Endothelial cell of umbilical vein (primary cell): ENCODE measurements at regions of chr21 and their contacts with region 1.

Region 1: GRCh38 chr21:27700974-27701614 is 734.2 kb upstream of the ADAMTS5 start:
- DNase-seq: peak; percentile 81
- H3K4me3 ChIP-seq: no peak overlapping the region
- H3K27ac ChIP-seq: no peak overlapping the region
- H3K4me1 ChIP-seq: no peaks in the 10 kb centered on the region
- H3K27me3 ChIP-seq: no peaks in the 10 kb centered on the region
- CTCF ChIP-seq: peak; percentile 78 to 82
- POLR2A ChIP-seq: no peak

Region 2: GRCh38 chr21:26769613-26770188 is 931.4 kb before region 1 on chr21:
- CTCF ChIA-PET with region 1: interaction called, 6 read pairs
- POLR2A ChIA-PET with region 1: no interaction called
- dilution Hi-C with region 1: no loop called
- intact Hi-C with region 1: loop called (anchors 1 kb)
- DNase-seq: peak; percentile 43
- H3K4me3 ChIP-seq: no peak overlapping the region
- H3K27ac ChIP-seq: no peak overlapping the region
- H3K4me1 ChIP-seq: no peaks in the 10 kb centered on the region
- H3K27me3 ChIP-seq: peaks cover 0 to 2% of the 10 kb centered on the region in 2 experiments
- CTCF ChIP-seq: peak; percentile 24 to 42
- POLR2A ChIP-seq: no peak

Region 3: GRCh38 chr21:26850108-26850643 is 850.9 kb before region 1 on chr21:
- CTCF ChIA-PET with region 1: interaction called, 131 read pairs
- POLR2A ChIA-PET with region 1: no interaction called
- dilution Hi-C with region 1: no loop called
- intact Hi-C with region 1: loop called (anchors 1 kb)
- DNase-seq: peak; percentile 75
- H3K4me3 ChIP-seq: no peak overlapping the region
- H3K27ac ChIP-seq: no peak overlapping the region
- H3K4me1 ChIP-seq: peaks cover 11% of the 10 kb centered on the region
- H3K27me3 ChIP-seq: peaks cover 5 to 16% of the 10 kb centered on the region in 2 experiments
- CTCF ChIP-seq: no peak
- POLR2A ChIP-seq: no peak

Region 4: GRCh38 chr21:27564684-27565301 is 136.3 kb before region 1 on chr21:
- CTCF ChIA-PET with region 1: interaction called, 45 read pairs
- POLR2A ChIA-PET with region 1: no interaction called
- dilution Hi-C with region 1: no loop called
- intact Hi-C with region 1: loop called (anchors 2 kb)
- DNase-seq: peak; percentile 68
- H3K4me3 ChIP-seq: no peak overlapping the region
- H3K27ac ChIP-seq: no peak overlapping the region
- H3K4me1 ChIP-seq: no peaks in the 10 kb centered on the region
- H3K27me3 ChIP-seq: no peaks in the 10 kb centered on the region
- CTCF ChIP-seq: peak; percentile 61 to 68
- POLR2A ChIP-seq: no peak

Region 5: GRCh38 chr21:28516991-28517592 is 816.0 kb after region 1 on chr21:
- CTCF ChIA-PET with region 1: interaction called, 3 read pairs
- POLR2A ChIA-PET with region 1: no interaction called
- dilution Hi-C with region 1: no loop called
- intact Hi-C with region 1: loop called (anchors 10 kb)
- DNase-seq: peak; percentile 32
- H3K4me3 ChIP-seq: no peak overlapping the region
- H3K27ac ChIP-seq: no peak overlapping the region
- H3K4me1 ChIP-seq: peaks cover 28% of the 10 kb centered on the region
- H3K27me3 ChIP-seq: no peaks in the 10 kb centered on the region
- CTCF ChIP-seq: peak; percentile 57 to 63
- POLR2A ChIP-seq: no peak